ENCODE measurements at regions of chr15 and their contacts with region 1.

Region 1: DNA sequence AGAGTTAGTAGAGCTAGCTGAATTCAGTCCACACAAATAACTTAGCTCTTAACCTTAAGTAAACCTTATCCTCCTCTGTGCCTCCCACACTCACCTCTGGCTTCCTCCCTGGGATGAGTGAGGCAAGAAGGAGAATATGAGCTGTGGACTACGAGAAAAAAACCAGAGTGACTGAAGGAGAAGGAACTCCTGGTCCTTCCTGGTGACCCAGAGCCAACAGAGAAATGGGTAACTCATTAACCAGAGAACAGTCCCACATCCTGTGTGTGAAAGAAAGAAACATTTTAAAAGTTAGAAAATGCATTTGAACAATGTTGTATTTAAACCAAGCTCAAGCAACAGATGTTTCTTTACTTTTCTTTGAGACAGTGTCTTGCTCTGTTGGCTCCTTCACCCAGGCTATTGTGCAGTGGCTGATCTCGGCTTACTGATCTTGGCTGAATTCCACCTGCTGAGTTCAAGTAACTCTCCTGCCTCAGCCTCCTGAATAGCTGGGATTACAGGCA is 27.5 kb upstream of the FAM81A start:
- DNase-seq: peak; percentile 64
- ATAC-seq: peak; percentile 4
- H3K4me3 ChIP-seq: peak overlapping the region; percentile 38
- H3K27ac ChIP-seq: peak overlapping the region; percentile 52
- H3K4me1 ChIP-seq: peaks cover 66% of the 10 kb centered on the region
- H3K27me3 ChIP-seq: no peaks in the 10 kb centered on the region
- CTCF ChIP-seq: no peak
- EP300 ChIP-seq: no peak
- POLR2A ChIP-seq: no peak
- RAD21 ChIP-seq: no peak

Region 2: GRCh38 chr15:58987489-58988005 is 422.9 kb before region 1 on chr15 and contains the start of gene RNF111:
- CTCF ChIA-PET with region 1: no interaction called
- POLR2A ChIA-PET with region 1: no interaction called
- RAD21 ChIA-PET with region 1: interaction called, 3 read pairs
- SMC1A ChIA-PET with region 1: interaction called, 3 read pairs
- in situ Hi-C with region 1: no loop called
- intact Hi-C with region 1: loop called (anchors 10 kb)
- DNase-seq: peak; percentile 90
- ATAC-seq: peak; percentile 90
- H3K4me3 ChIP-seq: peak within 1 kb of the TSS; percentile 75
- H3K27ac ChIP-seq: peak within 1 kb of the TSS; percentile 92
- H3K4me1 ChIP-seq: no peaks in the 10 kb centered on the region
- H3K27me3 ChIP-seq: no peaks in the 10 kb centered on the region
- CTCF ChIP-seq: no peak
- EP300 ChIP-seq: no peak
- POLR2A ChIP-seq: peak; percentile 76
- RAD21 ChIP-seq: no peak
- polyA plus RNA-seq, gene RNF111: 8.6 TPM

Region 3: DNA sequence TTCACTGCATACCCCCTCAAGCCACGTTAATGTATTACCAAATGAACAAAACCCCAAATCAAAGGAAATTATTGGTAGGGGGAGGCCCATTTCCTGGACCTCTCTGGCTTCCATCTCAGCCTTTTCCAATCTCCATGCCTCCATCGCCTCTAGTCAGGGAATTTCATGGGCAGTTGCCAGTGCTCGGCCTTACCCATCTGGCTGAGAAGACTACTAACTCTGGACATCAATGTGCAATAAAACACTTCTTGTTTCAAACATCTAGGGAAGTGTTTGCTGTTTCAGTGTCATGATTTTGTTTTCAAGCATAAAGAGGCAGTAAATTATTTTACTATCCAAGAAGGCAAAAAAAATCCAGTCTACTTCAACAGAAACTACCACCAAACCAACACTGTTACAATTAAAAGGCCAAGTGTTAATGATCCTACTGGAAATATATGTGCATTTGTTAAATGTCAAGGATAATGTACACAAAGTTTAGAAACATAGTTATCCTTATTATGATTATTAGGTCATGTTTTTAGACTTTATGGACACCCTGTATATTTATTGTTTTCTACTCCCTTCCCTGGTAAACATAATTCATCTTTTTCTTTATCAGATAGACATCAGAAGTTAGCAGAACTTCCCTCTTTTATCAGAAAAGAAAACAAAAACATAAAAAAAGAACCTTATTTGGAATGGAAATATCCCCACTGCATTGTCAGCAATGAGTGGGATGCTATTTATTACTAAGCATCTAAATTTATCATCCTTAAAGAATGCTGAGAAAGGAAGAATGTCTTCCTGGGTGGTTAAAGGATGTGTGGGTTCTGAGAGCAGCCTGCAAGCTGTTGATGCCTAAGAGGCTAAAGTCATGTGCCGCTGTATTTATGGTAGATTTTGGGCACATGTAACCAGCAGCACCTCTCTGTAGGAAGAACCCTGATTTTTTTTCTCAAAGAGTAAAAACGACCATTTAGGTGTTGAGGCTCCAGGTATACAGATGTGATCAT is 188.6 kb before region 1 on chr15:
- CTCF ChIA-PET with region 1: no interaction called
- POLR2A ChIA-PET with region 1: no interaction called
- RAD21 ChIA-PET with region 1: no interaction called
- SMC1A ChIA-PET with region 1: no interaction called
- in situ Hi-C with region 1: no loop called
- intact Hi-C with region 1: no loop called
- DNase-seq: no peak
- ATAC-seq: no peak
- H3K4me3 ChIP-seq: no peak overlapping the region
- H3K27ac ChIP-seq: no peak overlapping the region
- H3K4me1 ChIP-seq: no peaks in the 10 kb centered on the region
- H3K27me3 ChIP-seq: no peaks in the 10 kb centered on the region
- CTCF ChIP-seq: no peak
- EP300 ChIP-seq: no peak
- POLR2A ChIP-seq: no peak; the same call in 1 of the 2 replicates
- RAD21 ChIP-seq: no peak

Region 4: DNA sequence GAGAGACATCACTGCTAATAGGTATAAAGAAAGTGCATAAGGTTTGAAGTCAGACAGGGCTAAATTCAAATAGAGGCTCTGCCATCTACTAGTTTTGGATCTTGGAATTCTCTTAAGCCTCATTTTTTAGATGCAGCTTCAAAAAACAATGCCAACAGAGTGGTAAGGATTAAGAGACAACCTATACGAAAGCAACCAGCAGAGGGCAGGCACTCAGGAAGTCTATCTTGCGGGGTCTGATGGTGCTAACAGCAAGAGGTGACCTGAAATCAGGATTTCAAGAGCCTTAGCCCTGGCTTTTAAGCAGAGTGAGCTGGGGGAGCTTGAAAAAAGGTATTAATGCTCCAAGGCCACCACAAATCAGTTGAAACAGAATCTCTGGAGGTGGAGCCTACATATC is 163.1 kb before region 1 on chr15:
- CTCF ChIA-PET with region 1: interaction called, 83 read pairs
- POLR2A ChIA-PET with region 1: interaction called, 5 read pairs
- RAD21 ChIA-PET with region 1: interaction called, 99 read pairs
- SMC1A ChIA-PET with region 1: interaction called, 91 read pairs
- in situ Hi-C with region 1: loop called (anchors 5 kb)
- intact Hi-C with region 1: loop called (anchors 2 kb)
- DNase-seq: no peak
- ATAC-seq: peak; percentile 61
- H3K4me3 ChIP-seq: no peak overlapping the region
- H3K27ac ChIP-seq: peak overlapping the region; percentile 33; the same call in 1 of the 2 replicates
- H3K4me1 ChIP-seq: peaks cover 54% of the 10 kb centered on the region
- H3K27me3 ChIP-seq: no peaks in the 10 kb centered on the region
- CTCF ChIP-seq: peak; percentile 57 to 68 (median 62)
- EP300 ChIP-seq: no peak
- POLR2A ChIP-seq: no peak
- RAD21 ChIP-seq: peak; percentile 70

Region 5: DNA sequence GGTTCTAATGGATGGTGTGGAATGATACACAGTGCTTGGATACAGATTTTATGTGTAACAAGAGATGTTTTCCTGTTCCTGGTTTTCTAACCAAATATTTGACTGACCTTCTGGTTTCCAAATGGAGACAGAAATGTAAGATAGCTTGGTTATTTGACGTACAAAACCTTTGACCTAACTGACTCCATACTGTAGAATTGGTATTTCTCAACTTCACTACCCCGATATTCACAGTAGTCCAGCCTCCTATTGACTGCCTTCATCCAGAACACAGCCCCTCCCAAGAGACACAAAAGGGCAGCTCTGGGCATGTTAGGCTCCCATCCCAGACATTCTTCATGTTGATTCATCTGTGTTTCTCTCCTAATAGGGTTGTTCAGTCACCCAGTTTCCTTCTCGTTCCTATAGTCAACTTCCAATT is 71.2 kb before region 1 on chr15:
- CTCF ChIA-PET with region 1: interaction called, 3 read pairs
- POLR2A ChIA-PET with region 1: no interaction called
- RAD21 ChIA-PET with region 1: interaction called, 3 read pairs
- SMC1A ChIA-PET with region 1: interaction called, 4 read pairs
- in situ Hi-C with region 1: no loop called
- intact Hi-C with region 1: loop called (anchors 1 kb)
- DNase-seq: no peak
- ATAC-seq: no peak
- H3K4me3 ChIP-seq: no peak overlapping the region
- H3K27ac ChIP-seq: no peak overlapping the region
- H3K4me1 ChIP-seq: peaks cover 23% of the 10 kb centered on the region
- H3K27me3 ChIP-seq: no peaks in the 10 kb centered on the region
- CTCF ChIP-seq: no peak
- EP300 ChIP-seq: no peak
- POLR2A ChIP-seq: no peak
- RAD21 ChIP-seq: no peak

Region 6: GRCh38 chr15:59399465-59400102 is 10.9 kb before region 1 on chr15:
- CTCF ChIA-PET with region 1: interaction called, 24 read pairs
- POLR2A ChIA-PET with region 1: interaction called, 21 read pairs
- RAD21 ChIA-PET with region 1: interaction called, 78 read pairs
- SMC1A ChIA-PET with region 1: interaction called, 67 read pairs
- in situ Hi-C with region 1: no loop called
- intact Hi-C with region 1: no loop called
- DNase-seq: peak; percentile 77
- ATAC-seq: peak; percentile 96
- H3K4me3 ChIP-seq: peak overlapping the region; percentile 43
- H3K27ac ChIP-seq: peak overlapping the region; percentile 87
- H3K4me1 ChIP-seq: peaks cover 48% of the 10 kb centered on the region
- H3K27me3 ChIP-seq: no peaks in the 10 kb centered on the region
- CTCF ChIP-seq: no peak
- EP300 ChIP-seq: peak; percentile 83 to 97
- POLR2A ChIP-seq: no peak; the same call in 1 of the 2 replicates
- RAD21 ChIP-seq: no peak

Region 7: DNA sequence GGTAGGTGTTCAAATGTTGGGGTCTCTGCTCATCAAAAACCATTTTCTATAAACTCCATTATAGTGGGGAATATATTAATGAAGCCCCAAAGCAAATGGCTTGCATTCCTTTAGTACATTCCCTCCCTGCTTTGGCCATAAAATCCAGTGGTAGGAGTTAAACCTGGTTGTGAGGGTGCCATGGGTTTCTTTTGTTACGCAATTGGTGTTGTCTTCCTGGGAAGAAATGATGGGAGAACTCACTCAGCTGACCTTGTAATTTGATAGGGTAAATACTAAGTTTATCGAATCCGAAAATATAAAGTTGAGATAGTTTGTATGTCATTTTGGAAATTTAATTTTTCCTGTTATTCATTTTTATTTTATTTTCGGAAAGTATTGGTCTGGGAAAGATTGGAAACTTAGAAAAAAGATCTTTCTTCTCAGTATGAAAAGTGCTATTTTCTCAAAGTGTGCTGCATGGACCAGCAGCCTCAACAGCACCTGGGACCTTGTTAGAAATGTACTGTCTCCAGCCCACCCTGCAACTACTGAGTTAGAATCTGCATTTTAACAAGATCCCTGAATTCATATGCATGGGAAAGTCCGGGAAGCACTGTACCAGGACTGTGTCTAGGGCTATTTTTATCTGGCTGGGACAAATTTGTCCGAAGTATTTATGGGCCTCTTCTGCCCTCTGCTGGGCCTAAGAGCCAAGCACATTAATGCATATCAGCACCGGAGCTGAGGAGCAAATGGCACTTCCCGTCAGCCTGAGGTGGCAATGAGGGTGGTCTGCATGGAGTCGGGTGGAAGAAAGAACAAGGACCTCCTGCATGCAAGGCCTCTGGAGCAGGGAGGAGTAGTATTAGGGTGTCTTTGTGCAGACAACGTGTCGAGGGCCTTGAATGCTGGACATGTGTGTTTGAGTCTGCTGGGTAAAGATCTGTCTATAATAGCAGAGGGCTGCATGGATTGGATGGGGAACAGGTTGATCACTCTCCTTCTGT is 82.2 kb after region 1 on chr15:
- CTCF ChIA-PET with region 1: interaction called, 7 read pairs
- POLR2A ChIA-PET with region 1: no interaction called
- RAD21 ChIA-PET with region 1: interaction called, 11 read pairs
- SMC1A ChIA-PET with region 1: interaction called, 31 read pairs
- in situ Hi-C with region 1: no loop called
- intact Hi-C with region 1: no loop called
- DNase-seq: peak; percentile 40
- ATAC-seq: peak; percentile 97
- H3K4me3 ChIP-seq: no peak overlapping the region
- H3K27ac ChIP-seq: no peak overlapping the region
- H3K4me1 ChIP-seq: peaks cover 6% of the 10 kb centered on the region
- H3K27me3 ChIP-seq: no peaks in the 10 kb centered on the region
- CTCF ChIP-seq: peak; percentile 75 to 92 (median 90)
- EP300 ChIP-seq: no peak
- POLR2A ChIP-seq: no peak
- RAD21 ChIP-seq: peak; percentile 94

Region 8: GRCh38 chr15:59741274-59741906 is 330.9 kb after region 1 on chr15:
- CTCF ChIA-PET with region 1: no interaction called
- POLR2A ChIA-PET with region 1: no interaction called
- RAD21 ChIA-PET with region 1: no interaction called
- SMC1A ChIA-PET with region 1: no interaction called
- in situ Hi-C with region 1: no loop called
- intact Hi-C with region 1: no loop called
- DNase-seq: no peak
- ATAC-seq: no peak
- H3K4me3 ChIP-seq: no peak overlapping the region
- H3K27ac ChIP-seq: no peak overlapping the region
- H3K4me1 ChIP-seq: no peaks in the 10 kb centered on the region
- H3K27me3 ChIP-seq: no peaks in the 10 kb centered on the region; a peak in 1 of 4 replicates
- CTCF ChIP-seq: peak; percentile 12 to 21 (median 17); a peak in 2 of 6 replicates
- EP300 ChIP-seq: no peak
- POLR2A ChIP-seq: no peak
- RAD21 ChIP-seq: peak; percentile 28

Measured in GM12878 (cell line).